PC-3 (cell line): ENCODE measurements at regions of chr3 and their contacts with region 1.

Region 1: DNA sequence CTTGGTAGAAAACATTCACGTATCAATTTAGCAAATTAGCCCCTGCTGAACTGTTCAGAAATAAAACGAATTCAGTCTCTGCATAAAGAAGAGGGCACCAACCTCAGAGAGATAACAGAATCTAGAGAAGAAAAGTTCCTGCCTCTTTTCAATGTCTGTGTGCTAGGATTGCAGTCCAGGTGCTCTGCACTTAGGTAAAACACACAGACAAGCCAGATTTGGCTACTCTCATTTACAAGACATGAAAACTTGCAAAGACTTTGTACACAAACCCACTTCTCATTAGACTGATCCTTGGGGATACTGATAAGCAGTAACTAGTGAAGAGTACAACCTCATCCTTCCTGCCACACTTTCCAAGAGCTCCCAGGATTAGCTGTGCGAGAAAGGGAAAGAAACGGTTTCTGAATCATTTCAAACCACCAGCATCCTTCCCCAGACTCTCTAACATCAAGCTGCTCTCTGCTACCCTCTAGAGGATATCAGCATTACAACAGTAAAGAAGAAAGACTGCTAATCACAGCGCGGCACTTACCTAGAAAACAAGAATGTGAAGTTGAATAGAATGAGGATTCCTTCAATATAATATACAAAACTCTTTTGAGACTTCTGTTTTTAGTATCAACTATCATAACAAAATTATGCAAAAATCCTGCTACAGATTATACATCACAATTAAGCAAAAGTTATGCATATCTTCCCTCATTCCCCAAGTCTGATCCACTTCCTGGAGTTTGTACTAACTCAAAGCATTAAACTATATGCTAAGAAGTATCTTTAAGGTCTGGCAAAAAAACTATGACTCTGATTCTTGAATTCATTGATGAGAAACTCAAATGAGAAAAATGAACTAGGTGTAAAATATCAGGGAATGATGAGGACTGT is 306.4 kb downstream of the MAGI1 start:
- DNase-seq: peak; percentile 64
- ATAC-seq: peak; percentile 88
- H3K4me3 ChIP-seq: no peak overlapping the region
- H3K27ac ChIP-seq: no peak overlapping the region
- H3K4me1 ChIP-seq: no peaks in the 10 kb centered on the region
- H3K27me3 ChIP-seq: no peaks in the 10 kb centered on the region
- CTCF ChIP-seq: peak; percentile 65

Region 2: GRCh38 chr3:65439641-65440284 is 292.5 kb before region 1 on chr3:
- CTCF ChIA-PET with region 1: interaction called, 4 read pairs
- POLR2A ChIA-PET with region 1: no interaction called
- intact Hi-C with region 1: loop called (anchors 2 kb)
- DNase-seq: peak; percentile 43
- ATAC-seq: peak; percentile 89
- H3K4me3 ChIP-seq: no peak overlapping the region
- H3K27ac ChIP-seq: no peak overlapping the region
- H3K4me1 ChIP-seq: no peaks in the 10 kb centered on the region
- H3K27me3 ChIP-seq: no peaks in the 10 kb centered on the region
- CTCF ChIP-seq: peak; percentile 43

Region 3: GRCh38 chr3:65587650-65588439 is 144.4 kb before region 1 on chr3:
- CTCF ChIA-PET with region 1: no interaction called
- POLR2A ChIA-PET with region 1: no interaction called
- intact Hi-C with region 1: no loop called
- DNase-seq: no peak
- ATAC-seq: no peak
- H3K4me3 ChIP-seq: no peak overlapping the region
- H3K27ac ChIP-seq: no peak overlapping the region
- H3K4me1 ChIP-seq: no peaks in the 10 kb centered on the region
- H3K27me3 ChIP-seq: no peaks in the 10 kb centered on the region
- CTCF ChIP-seq: no peak

Region 4: DNA sequence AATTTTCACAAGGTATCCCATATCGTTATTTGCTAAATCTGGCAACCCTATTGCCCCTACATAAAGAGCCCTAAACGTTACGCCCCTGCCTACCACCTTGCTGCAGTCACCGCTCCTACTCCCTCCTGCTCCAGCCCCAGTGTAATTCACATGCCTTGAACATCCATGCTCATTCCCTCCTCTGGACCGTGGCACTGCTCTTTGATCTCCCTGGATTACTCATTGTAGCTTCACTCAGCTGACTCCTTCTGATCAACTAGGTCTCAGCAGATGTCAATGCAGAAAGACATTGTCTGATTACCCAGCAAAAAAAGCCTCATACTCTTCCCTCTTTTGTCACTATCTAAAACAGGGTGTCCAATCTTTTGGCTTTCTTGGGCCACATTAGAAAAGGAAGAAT is 1225.1 kb after region 1 on chr3:
- CTCF ChIA-PET with region 1: no interaction called
- POLR2A ChIA-PET with region 1: interaction called, 16 read pairs
- intact Hi-C with region 1: no loop called
- DNase-seq: no peak
- ATAC-seq: no peak
- H3K4me3 ChIP-seq: no peak overlapping the region
- H3K27ac ChIP-seq: no peak overlapping the region
- H3K4me1 ChIP-seq: no peaks in the 10 kb centered on the region
- H3K27me3 ChIP-seq: peaks cover 14% of the 10 kb centered on the region; the same call in 1 of the 2 replicates
- CTCF ChIP-seq: no peak